Dorsolateral prefrontal cortex (tissue), 120 donors: ENCODE measurements at regions of chr15 and their contacts with region 1.

Region 1: DNA sequence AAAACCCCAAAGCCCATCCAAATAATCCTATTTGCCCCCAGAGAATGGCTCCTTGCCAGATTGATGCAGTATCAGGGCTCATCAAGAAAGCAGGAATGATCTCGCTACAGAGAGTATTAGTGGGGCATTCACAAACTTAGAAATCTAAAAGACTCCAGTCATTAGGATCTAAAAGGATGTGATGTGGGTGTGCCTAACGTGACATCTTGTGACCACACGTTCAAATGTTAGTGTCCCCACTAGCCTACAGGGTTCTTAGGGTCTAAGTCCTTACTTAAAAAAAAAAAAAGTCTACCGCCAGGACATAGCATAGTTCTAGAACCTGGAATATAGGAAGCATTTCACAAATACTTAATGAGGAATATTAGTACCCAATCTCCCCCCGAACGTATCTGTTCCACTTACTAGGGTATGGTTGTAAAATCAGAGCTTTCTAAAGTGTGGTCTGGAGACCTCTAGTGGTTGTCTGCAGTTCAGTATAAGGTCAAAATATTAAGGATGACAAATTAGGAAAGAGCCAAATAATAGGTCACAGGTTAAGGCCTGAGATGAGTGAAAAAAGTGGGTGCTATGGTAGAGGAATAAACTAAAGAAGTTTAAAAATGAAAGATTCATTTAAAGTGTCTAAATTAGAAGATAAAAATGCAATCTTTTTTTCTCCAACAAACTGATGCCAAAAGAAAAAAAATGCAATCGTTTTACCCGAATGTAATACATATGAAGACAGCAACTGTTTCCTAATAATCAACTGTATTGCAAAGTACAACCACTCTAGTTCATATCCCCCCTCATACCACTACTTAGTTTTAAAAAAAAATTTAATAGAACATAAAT is 4.2 kb upstream of the CHRM5 start:
- DNase-seq: no peak
- H3K4me3 ChIP-seq: no peak overlapping the region
- H3K27ac ChIP-seq: no peak overlapping the region
- H3K27me3 ChIP-seq: no peaks in the 10 kb centered on the region
- CTCF ChIP-seq: peak; percentile 18 to 75 (median 56)

Region 2: DNA sequence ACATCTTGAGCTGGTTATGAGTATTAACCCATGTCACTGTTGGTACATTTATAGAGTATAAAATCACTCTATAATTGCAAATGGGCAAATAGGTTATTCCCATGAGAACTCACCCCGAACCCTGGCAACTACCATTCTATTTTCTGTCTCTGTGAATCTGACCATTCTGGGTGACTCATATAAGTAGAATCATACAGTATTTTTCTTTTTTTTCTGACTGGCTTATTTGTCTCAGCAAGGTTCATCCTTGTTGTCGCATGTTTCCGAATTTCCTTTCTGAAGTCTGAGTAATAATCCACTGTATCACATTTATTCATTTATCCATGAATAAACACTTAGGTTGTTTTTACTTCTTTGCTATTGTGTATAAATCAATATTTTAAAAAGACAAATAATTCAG is 55.6 kb before region 1 on chr15:
- intact Hi-C with region 1: loop called in 1 of 2 experiments (anchors 10 kb)
- DNase-seq: no peak
- H3K4me3 ChIP-seq: no peak overlapping the region
- H3K27ac ChIP-seq: no peak overlapping the region
- H3K27me3 ChIP-seq: no peaks in the 10 kb centered on the region
- CTCF ChIP-seq: no peak

Region 3: GRCh38 chr15:34038023-34038870 is 74.2 kb after region 1 on chr15:
- intact Hi-C with region 1: loop called (anchors 2 to 5 kb)
- DNase-seq: peak; percentile 65 to 84 (median 73)
- H3K4me3 ChIP-seq: peak overlapping the region; percentile 59 to 97 (median 84)
- H3K27ac ChIP-seq: peak overlapping the region; percentile 51 to 96 (median 89)
- H3K27me3 ChIP-seq: no peaks in the 10 kb centered on the region
- CTCF ChIP-seq: peak in 14 of 56 donors; percentile 9 to 49 (median 28)